Upper lobe of right lung (tissue), 1 donor: ENCODE measurements at regions of chr16 and their contacts with region 1.

Region 1: DNA sequence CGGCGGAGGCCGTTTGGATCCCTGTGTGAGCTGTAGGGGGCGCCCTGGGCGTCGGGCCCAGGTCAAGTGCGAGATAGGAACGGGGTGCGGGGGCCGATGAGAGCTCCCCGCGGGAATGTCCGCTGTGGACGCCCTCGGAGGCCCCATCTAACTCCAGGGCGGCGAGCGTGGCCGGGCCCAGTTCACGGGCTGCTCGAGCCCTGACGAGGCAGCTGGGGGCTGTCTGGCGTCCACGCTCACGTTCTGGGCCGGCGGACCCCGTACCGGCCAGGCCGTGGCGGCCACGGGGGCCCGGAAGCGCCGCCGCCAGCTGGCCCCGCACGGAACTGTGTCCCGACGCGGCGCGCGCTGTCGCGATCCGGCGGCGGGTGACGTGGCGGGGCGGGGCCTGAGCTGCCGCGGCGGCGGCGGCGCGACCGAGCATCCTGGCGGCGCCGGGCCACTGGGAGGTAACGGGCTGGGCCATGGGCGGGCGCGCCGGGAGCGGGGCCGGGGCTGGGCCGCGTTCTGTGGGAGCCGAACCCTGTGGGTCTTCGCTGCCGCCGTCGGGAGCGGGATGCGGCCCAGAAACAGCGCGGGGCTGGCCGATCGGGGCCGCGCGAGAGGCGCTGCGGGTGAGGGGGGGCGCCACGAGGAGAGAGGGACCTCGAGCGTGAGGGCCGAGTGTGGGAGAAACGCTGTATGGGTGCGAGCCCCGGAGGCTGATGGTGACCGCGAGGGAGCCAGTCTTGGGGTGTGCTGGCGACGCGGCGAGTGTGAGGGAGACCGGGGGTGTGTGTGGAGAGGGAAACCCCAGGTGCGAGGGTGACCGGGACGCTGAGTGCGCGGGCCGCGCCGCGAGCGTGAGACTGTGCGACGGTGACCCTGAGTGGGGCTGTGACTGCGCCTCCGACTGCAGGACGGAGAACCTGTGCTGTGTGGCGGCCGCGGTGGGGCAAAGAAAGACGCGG is at the start of gene SLC7A6:
- DNase-seq: peak; percentile 91
- ATAC-seq: peak; percentile 84
- H3K4me3 ChIP-seq: peak within 1 kb of the TSS; percentile 87
- H3K27ac ChIP-seq: peak within 1 kb of the TSS; percentile 93
- H3K4me1 ChIP-seq: peaks cover 19% of the 10 kb centered on the region
- H3K27me3 ChIP-seq: no peaks in the 10 kb centered on the region
- CTCF ChIP-seq: peak; percentile 77
- total RNA-seq, gene SLC7A6: 61.9 TPM

Region 2: GRCh38 chr16:68328151-68328859 is 63.9 kb after region 1 on chr16:
- intact Hi-C with region 1: loop called (anchors 5 kb)
- DNase-seq: peak; percentile 81
- ATAC-seq: peak; percentile 96
- H3K4me3 ChIP-seq: no peak overlapping the region
- H3K27ac ChIP-seq: no peak overlapping the region
- H3K4me1 ChIP-seq: peaks cover 19% of the 10 kb centered on the region
- H3K27me3 ChIP-seq: no peaks in the 10 kb centered on the region
- CTCF ChIP-seq: peak; percentile 94